A549 (cell line): ENCODE measurements at regions of chr11 and their contacts with region 1.

Region 1: DNA sequence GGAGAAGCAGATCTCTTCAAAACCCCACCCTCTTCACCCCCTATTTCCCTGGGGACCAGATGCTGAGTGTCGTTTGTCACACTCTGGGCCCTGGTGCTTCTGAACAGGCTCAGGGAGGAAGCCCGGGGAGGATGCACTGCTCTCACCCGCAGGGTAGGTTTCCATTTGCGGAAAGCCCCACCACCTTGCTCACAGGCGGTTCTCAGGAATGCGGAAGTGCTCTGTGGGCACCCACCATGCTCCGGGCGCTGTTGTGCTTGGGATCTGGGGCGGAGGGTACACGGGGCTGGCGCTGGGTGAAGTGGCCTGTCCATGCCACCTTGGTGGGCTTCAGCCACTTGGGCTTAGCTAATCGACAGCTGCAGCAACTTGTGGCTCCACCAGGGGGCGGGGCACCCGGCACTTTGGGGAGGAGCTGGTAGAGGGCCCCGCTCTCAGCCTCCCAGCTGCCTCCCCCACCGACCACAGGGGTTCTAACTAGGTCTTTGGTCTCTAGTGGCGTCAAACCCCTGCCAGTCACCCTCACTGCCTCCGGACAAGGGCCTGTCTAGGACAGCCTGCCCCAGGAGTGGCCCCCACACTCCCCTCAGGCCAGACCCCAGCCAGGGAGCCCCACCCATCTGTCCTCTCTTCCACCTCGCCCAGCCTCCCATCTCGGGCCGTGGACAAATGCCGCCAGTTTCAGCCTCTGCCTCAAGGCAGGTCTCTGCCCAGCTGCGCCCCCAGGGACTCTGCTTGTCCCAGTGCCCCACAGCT is 7.4 kb downstream of the NDUFV1 start:
- DNase-seq: peak in 1 of 2 experiments; percentile 46
- ATAC-seq: peak; percentile 55 to 82; a peak in 5 of 6 replicates
- H3K4me3 ChIP-seq: no peak overlapping the region
- H3K27ac ChIP-seq: no peak overlapping the region; a peak in 1 of 6 replicates
- H3K4me1 ChIP-seq: no peaks in the 10 kb centered on the region
- CTCF ChIP-seq: peak; percentile 54
- EP300 ChIP-seq: no peak
- POLR2A ChIP-seq: no peak
- RAD21 ChIP-seq: 0 out of 5 replicates have a peak, but pooled peaks of 1 of the 2 experiments have one; percentile 27

Region 2: GRCh38 chr11:67436459-67437081 is 177.6 kb before region 1 on chr11:
- CTCF ChIA-PET with region 1: no interaction called
- POLR2A ChIA-PET with region 1: no interaction called
- DNase-seq: no peak
- ATAC-seq: peak; percentile 3 to 9; a peak in 1 of 6 replicates
- H3K4me3 ChIP-seq: no peak overlapping the region
- H3K27ac ChIP-seq: no peak overlapping the region; a peak in 1 of 6 replicates
- H3K4me1 ChIP-seq: peaks cover 15% of the 10 kb centered on the region; the same call in 1 of the 3 replicates
- CTCF ChIP-seq: no peak
- EP300 ChIP-seq: no peak
- POLR2A ChIP-seq: no peak
- RAD21 ChIP-seq: no peak

Region 3: GRCh38 chr11:67572747-67573419 is 41.3 kb before region 1 on chr11:
- CTCF ChIA-PET with region 1: interaction called, 15 read pairs
- POLR2A ChIA-PET with region 1: no interaction called
- DNase-seq: peak in 1 of 2 experiments; percentile 81
- ATAC-seq: peak; percentile 52 to 80; a peak in 4 of 6 replicates
- H3K4me3 ChIP-seq: 0 out of 3 replicates have a peak overlapping the region, but pooled peaks have one; percentile 24
- H3K27ac ChIP-seq: peak overlapping the region; percentile 31 to 72; a peak in 4 of 6 replicates
- H3K4me1 ChIP-seq: peaks cover 13% of the 10 kb centered on the region
- CTCF ChIP-seq: peak; percentile 88
- EP300 ChIP-seq: no peak
- POLR2A ChIP-seq: no peak
- RAD21 ChIP-seq: peak; percentile 80 to 85

Region 4: GRCh38 chr11:67583247-67584204 is 30.6 kb before region 1 on chr11 and contains the start of gene GSTP1:
- CTCF ChIA-PET with region 1: interaction called, 20 read pairs
- POLR2A ChIA-PET with region 1: no interaction called
- DNase-seq: peak; percentile 81 to 90
- ATAC-seq: peak; percentile 88 to 93
- H3K4me3 ChIP-seq: peak within 1 kb of the TSS; percentile 92
- H3K27ac ChIP-seq: peak within 1 kb of the TSS; percentile 97 to 99
- H3K4me1 ChIP-seq: peaks cover 55% of the 10 kb centered on the region
- CTCF ChIP-seq: peak; percentile 75
- EP300 ChIP-seq: no peak
- POLR2A ChIP-seq: peak; percentile 99
- RAD21 ChIP-seq: peak; percentile 32 to 62; a peak in 4 of 5 replicates
- polyA plus RNA-seq, gene GSTP1: 1,034 and 1,447 TPM in 2 replicates

Region 5: GRCh38 chr11:67600324-67601029 is 13.7 kb before region 1 on chr11:
- CTCF ChIA-PET with region 1: interaction called, 20 read pairs
- POLR2A ChIA-PET with region 1: no interaction called
- DNase-seq: no peak
- ATAC-seq: no peak
- H3K4me3 ChIP-seq: no peak overlapping the region
- H3K27ac ChIP-seq: no peak overlapping the region
- H3K4me1 ChIP-seq: peaks cover under 1% of the 10 kb centered on the region; the same call in 1 of the 3 replicates
- CTCF ChIP-seq: no peak
- EP300 ChIP-seq: no peak
- POLR2A ChIP-seq: no peak
- RAD21 ChIP-seq: no peak

Region 6: DNA sequence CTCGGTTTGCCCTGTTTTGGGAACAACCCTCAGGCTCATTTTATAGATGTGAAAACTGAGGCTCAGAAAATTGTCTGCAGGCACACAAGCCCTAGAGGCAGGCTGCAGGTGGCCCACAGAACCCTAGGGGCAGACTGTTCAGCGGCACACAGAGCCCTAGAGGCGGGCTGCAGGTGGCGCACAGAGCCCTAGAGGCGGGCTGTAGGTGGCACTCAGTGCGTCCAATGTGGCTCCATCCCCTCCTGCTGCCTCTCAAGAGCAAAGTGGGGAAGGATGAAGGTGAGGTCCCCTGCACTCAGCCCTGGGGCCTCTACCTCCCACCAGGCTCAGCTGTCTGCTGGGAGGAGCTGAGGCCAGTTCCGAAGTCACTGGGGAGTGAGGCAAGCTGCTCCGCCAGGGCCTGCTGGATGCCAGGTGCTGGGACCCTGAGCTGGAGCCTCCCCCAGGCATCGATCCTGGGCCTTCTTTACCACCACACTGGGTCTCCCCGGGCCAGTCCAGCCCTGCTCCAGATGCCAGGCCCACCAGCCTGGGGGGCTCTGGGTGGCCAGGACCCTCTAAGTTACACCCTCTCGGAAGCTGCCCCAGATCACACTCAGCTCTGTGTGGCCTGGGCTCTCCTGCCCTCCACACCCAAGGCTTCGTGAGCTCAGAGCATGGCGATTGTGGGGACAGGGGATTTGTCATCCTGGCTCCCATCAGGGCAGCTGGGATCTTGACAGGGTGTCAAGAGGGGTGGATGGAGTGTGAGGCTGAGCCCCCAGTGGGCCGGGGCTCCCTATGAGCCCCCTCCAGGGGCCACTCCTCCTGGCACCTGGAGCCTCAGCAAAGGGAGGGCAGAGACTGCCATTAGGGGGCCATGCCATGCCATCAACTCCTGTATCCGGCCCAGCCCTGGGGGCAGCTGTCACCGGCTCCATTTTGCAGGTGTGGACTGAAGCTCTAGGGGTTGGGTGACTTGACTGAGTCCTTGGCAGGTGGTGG is 34.3 kb after region 1 on chr11:
- CTCF ChIA-PET with region 1: interaction called, 18 read pairs
- POLR2A ChIA-PET with region 1: no interaction called
- DNase-seq: peak; percentile 47 to 59
- ATAC-seq: peak; percentile 92 to 94
- H3K4me3 ChIP-seq: no peak overlapping the region
- H3K27ac ChIP-seq: no peak overlapping the region
- H3K4me1 ChIP-seq: peaks cover 5% of the 10 kb centered on the region; the same call in 2 of the 3 replicates
- CTCF ChIP-seq: peak; percentile 32; the same call in 1 of the 3 replicates
- EP300 ChIP-seq: no peak
- POLR2A ChIP-seq: no peak
- RAD21 ChIP-seq: peak in 1 of 2 experiments; percentile 19; a peak in 2 of 5 replicates